T-cell (primary cell): ENCODE measurements at regions of chr10 and their contacts with region 1.

Region 1: GRCh38 chr10:21969326-21970287 is 33.9 kb downstream of the DNAJC1 start:
- DNase-seq: no peak
- ATAC-seq: no peak
- H3K4me3 ChIP-seq: no peak overlapping the region
- H3K4me3 Mint-ChIP-seq: no peak overlapping the region
- H3K27ac ChIP-seq: no peak overlapping the region
- H3K27ac Mint-ChIP-seq: no peak overlapping the region
- H3K4me1 ChIP-seq: no peaks in the 10 kb centered on the region
- H3K4me1 Mint-ChIP-seq: peaks cover 0 to 9% (median 7%) of the 10 kb centered on the region in 3 donors
- H3K27me3 ChIP-seq: no peaks in the 10 kb centered on the region
- H3K27me3 Mint-ChIP-seq: no peaks in the 10 kb centered on the region

Region 2: GRCh38 chr10:21943633-21944265 is 25.9 kb before region 1 on chr10:
- CTCF ChIA-PET with region 1: no interaction called
- POLR2A ChIA-PET with region 1: no interaction called
- DNase-seq: no peak
- ATAC-seq: no peak
- H3K4me3 ChIP-seq: no peak overlapping the region
- H3K4me3 Mint-ChIP-seq: no peak overlapping the region
- H3K27ac ChIP-seq: no peak overlapping the region
- H3K27ac Mint-ChIP-seq: no peak overlapping the region
- H3K4me1 ChIP-seq: no peaks in the 10 kb centered on the region
- H3K4me1 Mint-ChIP-seq: peaks cover 14 to 32% (median 15%) of the 10 kb centered on the region in 3 donors
- H3K27me3 ChIP-seq: no peaks in the 10 kb centered on the region
- H3K27me3 Mint-ChIP-seq: no peaks in the 10 kb centered on the region

Region 3: GRCh38 chr10:22029445-22030236 is 60.0 kb after region 1 on chr10:
- CTCF ChIA-PET with region 1: no interaction called
- POLR2A ChIA-PET with region 1: no interaction called
- DNase-seq: peak in 1 of 35 experiments; percentile 26
- ATAC-seq: peak; percentile 84 to 97 (median 90)
- H3K4me3 ChIP-seq: no peak overlapping the region
- H3K4me3 Mint-ChIP-seq: peak overlapping the region in 2 of 3 donors; percentile 4 to 16
- H3K27ac ChIP-seq: no peak overlapping the region
- H3K27ac Mint-ChIP-seq: peak overlapping the region; percentile 53 to 73
- H3K4me1 ChIP-seq: peaks cover 0 to 7% of the 10 kb centered on the region in 2 experiments
- H3K4me1 Mint-ChIP-seq: peaks cover 11 to 15% (median 15%) of the 10 kb centered on the region in 3 donors
- H3K27me3 ChIP-seq: no peaks in the 10 kb centered on the region
- H3K27me3 Mint-ChIP-seq: peaks cover 0 to 16% of the 10 kb centered on the region in 2 donors

Region 4: GRCh38 chr10:22193945-22194344 is 224.3 kb after region 1 on chr10:
- CTCF ChIA-PET with region 1: no interaction called
- POLR2A ChIA-PET with region 1: interaction called in 1 of 2 experiments, 11 read pairs
- DNase-seq: no peak
- ATAC-seq: no peak
- H3K4me3 ChIP-seq: no peak overlapping the region
- H3K4me3 Mint-ChIP-seq: no peak overlapping the region
- H3K27ac ChIP-seq: no peak overlapping the region
- H3K27ac Mint-ChIP-seq: no peak overlapping the region
- H3K4me1 ChIP-seq: no peaks in the 10 kb centered on the region
- H3K4me1 Mint-ChIP-seq: no peaks in the 10 kb centered on the region
- H3K27me3 ChIP-seq: no peaks in the 10 kb centered on the region
- H3K27me3 Mint-ChIP-seq: peaks cover 0 to 4% of the 10 kb centered on the region in 2 donors

Region 5: GRCh38 chr10:22780474-22780885 is 810.9 kb after region 1 on chr10:
- CTCF ChIA-PET with region 1: no interaction called
- POLR2A ChIA-PET with region 1: no interaction called
- DNase-seq: no peak
- ATAC-seq: no peak
- H3K4me3 ChIP-seq: no peak overlapping the region
- H3K4me3 Mint-ChIP-seq: no peak overlapping the region
- H3K27ac ChIP-seq: no peak overlapping the region
- H3K27ac Mint-ChIP-seq: no peak overlapping the region
- H3K4me1 ChIP-seq: no peaks in the 10 kb centered on the region
- H3K4me1 Mint-ChIP-seq: peaks cover 4 to 8% (median 6%) of the 10 kb centered on the region in 3 donors
- H3K27me3 ChIP-seq: no peaks in the 10 kb centered on the region
- H3K27me3 Mint-ChIP-seq: no peaks in the 10 kb centered on the region